ENCODE measurements at regions of chr7 and their contacts with region 1.

Region 1: DNA sequence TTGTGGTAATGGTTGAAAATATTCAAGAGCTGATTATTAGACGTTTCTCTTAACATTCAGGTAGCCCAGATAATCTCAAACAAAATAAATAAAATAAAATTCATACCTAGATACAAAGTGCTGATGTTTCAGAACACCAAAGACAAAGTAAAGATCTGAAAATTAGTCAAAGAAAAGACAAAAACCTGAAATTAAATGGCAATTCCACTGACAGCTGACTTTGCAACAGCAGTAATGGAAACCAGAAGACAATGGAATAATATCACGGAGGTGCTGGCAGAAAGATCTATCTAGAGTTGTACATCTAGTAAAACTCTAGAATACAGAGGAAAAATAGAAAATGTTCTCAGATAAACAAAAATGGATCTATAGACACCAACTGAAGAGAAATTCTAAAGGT is 58.0 kb upstream of the IKZF1 start:
- DNase-seq: no peak
- ATAC-seq: no peak
- H3K4me3 Mint-ChIP-seq: no peak overlapping the region
- H3K27ac Mint-ChIP-seq: no peak overlapping the region
- H3K4me1 Mint-ChIP-seq: peaks cover 5% of the 10 kb centered on the region
- H3K27me3 Mint-ChIP-seq: no peaks in the 10 kb centered on the region
- CTCF ChIP-seq: no peak

Region 2: DNA sequence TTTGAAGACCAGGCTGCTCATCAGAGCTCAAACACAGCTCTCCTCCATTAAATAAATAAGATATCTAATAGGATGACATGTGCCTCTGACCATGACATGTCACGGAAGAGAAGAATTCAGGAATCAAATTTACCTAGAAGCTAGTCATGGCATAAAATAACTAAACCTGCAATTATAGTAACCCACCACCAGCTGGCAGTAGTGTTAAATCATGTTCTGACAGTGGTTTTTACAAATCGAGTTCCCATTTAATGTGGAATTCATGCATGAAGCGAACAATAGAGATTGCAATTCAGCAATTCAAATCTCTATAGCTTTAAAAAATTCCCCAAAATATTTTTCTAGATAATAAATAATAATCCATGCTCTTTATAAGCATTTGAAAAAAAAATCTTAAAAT is 16.6 kb before region 1 on chr7:
- CTCF ChIA-PET with region 1: interaction called, 5 read pairs
- POLR2A ChIA-PET with region 1: no interaction called
- intact Hi-C with region 1: loop called (anchors 2 kb)
- DNase-seq: no peak
- ATAC-seq: no peak
- H3K4me3 Mint-ChIP-seq: no peak overlapping the region
- H3K27ac Mint-ChIP-seq: no peak overlapping the region
- H3K4me1 Mint-ChIP-seq: peaks cover 5% of the 10 kb centered on the region
- H3K27me3 Mint-ChIP-seq: no peaks in the 10 kb centered on the region
- CTCF ChIP-seq: no peak

Region 3: DNA sequence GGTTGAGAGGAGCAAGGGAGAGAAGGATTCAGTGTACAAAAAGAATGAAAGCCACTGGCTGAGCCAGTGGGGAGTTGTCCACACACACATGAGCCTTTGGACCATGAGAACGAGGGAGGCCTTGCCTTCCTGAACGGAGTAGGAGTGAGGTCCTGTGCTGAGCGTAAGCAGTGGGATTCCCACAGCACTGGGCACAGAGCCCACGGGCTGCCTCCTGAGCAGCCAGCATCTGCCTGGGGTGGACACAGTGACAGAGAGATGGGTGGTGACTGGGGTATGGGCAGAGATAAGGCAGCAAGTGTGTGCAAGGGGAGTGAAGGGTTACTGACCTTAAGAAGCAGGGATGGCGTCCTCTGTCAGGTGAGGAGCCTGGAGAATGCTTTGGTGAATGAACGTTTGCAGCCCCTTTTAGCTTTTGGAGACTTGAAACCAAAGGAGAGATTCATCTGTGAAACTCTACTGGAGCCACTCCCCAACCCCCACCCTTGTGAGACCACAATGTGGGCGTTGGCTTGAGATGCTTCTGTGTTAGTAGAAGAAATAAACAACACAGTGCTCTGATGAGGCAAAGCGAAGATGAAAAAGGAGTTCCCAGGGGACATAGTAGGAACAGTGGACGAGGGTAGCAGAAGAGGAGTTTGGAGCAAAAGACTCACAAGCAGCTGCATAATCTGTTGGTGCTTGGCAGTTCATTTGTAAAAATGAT is 147.1 kb after region 1 on chr7:
- CTCF ChIA-PET with region 1: no interaction called
- POLR2A ChIA-PET with region 1: no interaction called
- intact Hi-C with region 1: no loop called
- DNase-seq: no peak
- ATAC-seq: peak; percentile 75
- H3K4me3 Mint-ChIP-seq: peak overlapping the region; percentile 69
- H3K27ac Mint-ChIP-seq: peak overlapping the region; percentile 95
- H3K4me1 Mint-ChIP-seq: peaks cover 97% of the 10 kb centered on the region
- H3K27me3 Mint-ChIP-seq: no peaks in the 10 kb centered on the region
- CTCF ChIP-seq: no peak